ENCODE measurements at regions of chr12 and their contacts with region 1.

Region 1: GRCh38 chr12:54359033-54359761 is 5.1 kb downstream of the GPR84 start:
- DNase-seq: peak; percentile 98
- H3K4me3 Mint-ChIP-seq: no peak overlapping the region
- H3K27ac Mint-ChIP-seq: no peak overlapping the region
- H3K4me1 Mint-ChIP-seq: peaks cover 19% of the 10 kb centered on the region
- H3K27me3 Mint-ChIP-seq: no peaks in the 10 kb centered on the region

Region 2: DNA sequence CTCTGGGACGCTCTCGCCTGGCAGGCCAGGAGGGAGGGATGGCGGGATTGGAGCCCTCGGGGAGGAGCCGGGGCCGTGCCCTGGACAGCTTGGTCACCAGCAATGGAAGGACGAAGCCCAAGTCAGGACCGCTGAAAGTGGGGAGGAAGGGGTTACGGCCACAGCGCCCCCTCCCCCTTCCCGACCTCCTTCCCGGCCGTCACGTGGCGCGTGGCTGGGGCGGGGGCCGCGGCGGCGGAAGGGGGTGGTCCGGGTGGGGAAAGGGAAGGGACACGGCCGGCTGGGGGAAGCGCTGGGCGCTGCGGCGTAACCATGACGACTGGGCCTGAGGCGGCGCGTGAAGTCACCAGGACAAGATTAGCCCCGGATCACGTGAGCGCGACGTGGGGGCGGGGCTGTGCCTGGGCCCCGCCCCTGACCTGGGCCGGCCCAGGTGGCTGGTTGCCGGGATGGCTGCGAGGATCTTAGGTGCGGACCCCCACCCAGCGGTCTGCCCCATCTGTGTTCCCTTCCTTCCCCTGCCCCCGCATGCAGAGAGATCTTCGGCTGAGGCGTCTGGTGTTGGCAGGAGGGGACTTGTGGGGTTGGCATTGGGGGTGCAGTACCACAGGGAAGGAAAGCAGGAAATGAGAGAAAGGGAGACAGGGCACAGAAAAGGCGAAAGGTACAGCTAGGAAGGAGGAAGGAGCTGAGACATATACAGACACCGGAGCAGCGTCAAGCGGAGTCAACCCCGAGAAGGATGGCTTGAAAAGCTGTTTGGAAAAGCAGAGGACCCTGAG is 866.2 kb before region 1 on chr12:
- CTCF ChIA-PET with region 1: no interaction called
- intact Hi-C with region 1: no loop called
- DNase-seq: peak; percentile 90
- H3K4me3 Mint-ChIP-seq: peak overlapping the region; percentile 88
- H3K27ac Mint-ChIP-seq: peak overlapping the region; percentile 81
- H3K4me1 Mint-ChIP-seq: peaks cover 26% of the 10 kb centered on the region
- H3K27me3 Mint-ChIP-seq: no peaks in the 10 kb centered on the region

Region 3: DNA sequence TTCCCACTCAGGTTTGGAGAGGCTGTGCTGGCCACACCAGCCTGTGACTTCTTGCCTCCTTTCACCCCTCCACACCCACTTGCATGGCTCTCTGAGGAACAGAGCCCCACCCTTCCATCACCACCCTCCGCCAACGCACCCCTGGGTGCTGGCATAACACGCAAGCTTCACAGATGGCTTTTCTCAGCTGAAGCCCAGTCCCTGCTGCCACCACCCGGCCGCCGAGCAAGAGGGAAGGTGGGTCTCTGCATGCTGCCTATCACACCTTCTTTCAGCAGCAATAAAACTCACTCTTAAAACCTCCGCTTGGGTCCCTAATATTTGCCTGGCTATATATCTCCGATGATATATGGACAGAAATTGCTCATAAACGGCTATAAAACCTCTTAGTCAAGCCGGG is 212.0 kb before region 1 on chr12:
- CTCF ChIA-PET with region 1: no interaction called
- intact Hi-C with region 1: no loop called
- DNase-seq: no peak
- H3K4me3 Mint-ChIP-seq: no peak overlapping the region
- H3K27ac Mint-ChIP-seq: no peak overlapping the region
- H3K4me1 Mint-ChIP-seq: no peaks in the 10 kb centered on the region
- H3K27me3 Mint-ChIP-seq: peaks cover 12% of the 10 kb centered on the region

Region 4: GRCh38 chr12:54201001-54201794 is 158.0 kb before region 1 on chr12:
- CTCF ChIA-PET with region 1: no interaction called
- intact Hi-C with region 1: no loop called
- DNase-seq: peak; percentile 75
- H3K4me3 Mint-ChIP-seq: no peak overlapping the region
- H3K27ac Mint-ChIP-seq: no peak overlapping the region
- H3K4me1 Mint-ChIP-seq: no peaks in the 10 kb centered on the region
- H3K27me3 Mint-ChIP-seq: peaks cover 40% of the 10 kb centered on the region

Region 5: DNA sequence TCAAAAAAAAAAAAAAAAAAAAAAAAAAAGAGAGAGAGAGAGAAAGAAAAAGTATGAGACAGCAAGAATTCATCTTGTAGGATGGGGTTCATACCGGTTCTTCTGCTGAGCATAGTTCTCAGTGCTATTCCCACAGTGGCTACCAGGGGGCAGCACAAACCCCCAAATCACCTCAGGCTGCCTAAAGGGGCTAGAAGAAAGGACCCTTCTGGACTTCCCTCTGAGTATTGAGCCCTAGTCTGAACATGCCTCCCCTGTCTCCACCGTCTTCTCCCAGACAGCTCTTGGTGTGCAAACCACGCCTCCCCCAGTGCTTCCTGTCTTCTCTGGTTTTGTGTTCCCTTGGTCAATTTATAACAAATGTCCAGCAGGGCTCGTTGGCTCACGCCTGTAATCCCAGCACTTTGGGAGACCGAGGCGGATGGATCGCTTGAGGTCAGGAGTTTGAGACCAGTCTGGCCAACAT is 139.1 kb before region 1 on chr12:
- CTCF ChIA-PET with region 1: interaction called, 16 read pairs
- intact Hi-C with region 1: loop called (anchors 1 kb)
- DNase-seq: peak; percentile 84
- H3K4me3 Mint-ChIP-seq: no peak overlapping the region
- H3K27ac Mint-ChIP-seq: no peak overlapping the region
- H3K4me1 Mint-ChIP-seq: peaks cover 19% of the 10 kb centered on the region
- H3K27me3 Mint-ChIP-seq: peaks cover 4% of the 10 kb centered on the region

Region 6: GRCh38 chr12:54294152-54294952 is 64.8 kb before region 1 on chr12:
- CTCF ChIA-PET with region 1: interaction called, 117 read pairs
- intact Hi-C with region 1: loop called (anchors 1 kb)
- DNase-seq: peak; percentile 82
- H3K4me3 Mint-ChIP-seq: no peak overlapping the region
- H3K27ac Mint-ChIP-seq: no peak overlapping the region
- H3K4me1 Mint-ChIP-seq: no peaks in the 10 kb centered on the region
- H3K27me3 Mint-ChIP-seq: peaks cover 7% of the 10 kb centered on the region

Region 7: GRCh38 chr12:54337280-54337842 is 21.8 kb before region 1 on chr12:
- CTCF ChIA-PET with region 1: interaction called, 92 read pairs
- intact Hi-C with region 1: no loop called
- DNase-seq: no peak
- H3K4me3 Mint-ChIP-seq: no peak overlapping the region
- H3K27ac Mint-ChIP-seq: no peak overlapping the region
- H3K4me1 Mint-ChIP-seq: peaks cover 22% of the 10 kb centered on the region
- H3K27me3 Mint-ChIP-seq: no peaks in the 10 kb centered on the region

Region 8: GRCh38 chr12:54411391-54412241 is 52.4 kb after region 1 on chr12:
- CTCF ChIA-PET with region 1: no interaction called
- intact Hi-C with region 1: loop called (anchors 1 kb)
- DNase-seq: peak; percentile 71
- H3K4me3 Mint-ChIP-seq: peak overlapping the region; percentile 38
- H3K27ac Mint-ChIP-seq: peak overlapping the region; percentile 96
- H3K4me1 Mint-ChIP-seq: peaks cover 58% of the 10 kb centered on the region
- H3K27me3 Mint-ChIP-seq: no peaks in the 10 kb centered on the region

Region 9: DNA sequence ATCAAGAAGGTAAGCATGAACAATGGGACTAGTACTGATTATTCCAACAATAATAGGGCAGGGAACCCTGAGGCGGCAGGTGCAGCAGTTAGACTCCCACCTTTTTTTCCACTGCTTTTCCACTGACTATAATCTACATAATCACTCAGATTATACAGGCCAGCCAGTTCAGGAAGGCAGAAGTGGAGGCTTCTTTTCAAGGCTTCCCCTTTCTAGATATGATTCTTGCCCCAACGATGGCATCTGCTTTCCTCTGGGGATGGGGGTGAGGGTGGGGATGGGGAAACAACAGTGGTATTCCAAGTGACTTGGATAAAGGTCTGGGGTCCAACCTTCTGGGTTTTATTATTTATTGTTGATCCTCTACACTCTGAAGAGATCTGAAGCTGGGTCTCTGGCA is 138.7 kb after region 1 on chr12:
- CTCF ChIA-PET with region 1: no interaction called
- intact Hi-C with region 1: loop called (anchors 1 kb)
- DNase-seq: no peak
- H3K4me3 Mint-ChIP-seq: peak overlapping the region; percentile 95
- H3K27ac Mint-ChIP-seq: peak overlapping the region; percentile 97
- H3K4me1 Mint-ChIP-seq: peaks cover 36% of the 10 kb centered on the region
- H3K27me3 Mint-ChIP-seq: no peaks in the 10 kb centered on the region